ENCODE measurements at regions of chr17 and their contacts with region 1.

Region 1: GRCh38 chr17:7561028-7561575 is 617 bp upstream of the SENP3 start:
- DNase-seq: peak; percentile 87
- H3K4me3 ChIP-seq: peak overlapping the region; percentile 60 to 82 (median 73)
- H3K27ac ChIP-seq: peak overlapping the region; percentile 76
- H3K4me1 ChIP-seq: peaks cover 40% of the 10 kb centered on the region
- H3K27me3 ChIP-seq: no peaks in the 10 kb centered on the region
- CTCF ChIP-seq: peak; percentile 64 to 82

Region 2: DNA sequence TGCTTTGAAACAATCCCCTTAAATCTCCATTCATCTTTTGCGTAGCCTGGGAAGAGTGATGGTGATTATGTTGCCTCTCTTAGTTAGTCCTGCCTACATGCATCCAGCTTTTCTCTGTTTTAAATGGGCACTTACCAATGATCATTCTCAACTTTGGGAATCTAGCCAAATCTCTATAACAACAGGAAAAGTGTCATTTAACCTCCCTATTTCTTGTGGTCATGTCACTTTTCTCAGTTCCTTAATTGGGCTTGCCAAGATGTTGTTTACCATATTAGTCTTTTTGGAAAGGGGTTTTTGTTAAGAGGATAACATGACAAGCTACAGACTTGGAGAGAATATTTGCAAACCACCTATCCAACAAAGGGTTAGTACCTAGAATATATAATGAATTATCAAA is 465.5 kb before region 1 on chr17:
- CTCF ChIA-PET with region 1: no interaction called
- dilution Hi-C with region 1: no loop called
- in situ Hi-C with region 1: no loop called
- intact Hi-C with region 1: no loop called
- DNase-seq: no peak
- H3K4me3 ChIP-seq: no peak overlapping the region
- H3K27ac ChIP-seq: no peak overlapping the region
- H3K4me1 ChIP-seq: no peaks in the 10 kb centered on the region
- H3K27me3 ChIP-seq: no peaks in the 10 kb centered on the region
- CTCF ChIP-seq: no peak

Region 3: GRCh38 chr17:7280519-7281429 is 280.3 kb before region 1 on chr17:
- CTCF ChIA-PET with region 1: no interaction called
- dilution Hi-C with region 1: no loop called
- in situ Hi-C with region 1: no loop called
- intact Hi-C with region 1: loop called (anchors 1 kb)
- DNase-seq: peak; percentile 78
- H3K4me3 ChIP-seq: peak overlapping the region; percentile 47 to 49 (median 48)
- H3K27ac ChIP-seq: peak overlapping the region; percentile 24
- H3K4me1 ChIP-seq: peaks cover 22% of the 10 kb centered on the region
- H3K27me3 ChIP-seq: no peaks in the 10 kb centered on the region
- CTCF ChIP-seq: peak; percentile 95 to 97

Region 4: GRCh38 chr17:7380855-7381742 is 180.0 kb before region 1 on chr17 and contains the start of gene TNK1:
- CTCF ChIA-PET with region 1: no interaction called
- dilution Hi-C with region 1: no loop called
- in situ Hi-C with region 1: no loop called
- intact Hi-C with region 1: loop called (anchors 1 kb)
- DNase-seq: peak; percentile 66
- H3K4me3 ChIP-seq: peak within 1 kb of the TSS; percentile 57 to 60 (median 57)
- H3K27ac ChIP-seq: peak within 1 kb of the TSS; percentile 50
- H3K4me1 ChIP-seq: peaks cover 7% of the 10 kb centered on the region
- H3K27me3 ChIP-seq: no peaks in the 10 kb centered on the region
- CTCF ChIP-seq: no peak
- total RNA-seq, gene TNK1: 13.3 to 15.9 TPM

Region 5: GRCh38 chr17:7515911-7516610 is 45.0 kb before region 1 on chr17:
- CTCF ChIA-PET with region 1: interaction called, 8 read pairs
- dilution Hi-C with region 1: no loop called
- in situ Hi-C with region 1: no loop called
- intact Hi-C with region 1: loop called (anchors 1 kb)
- DNase-seq: no peak
- H3K4me3 ChIP-seq: no peak overlapping the region
- H3K27ac ChIP-seq: no peak overlapping the region
- H3K4me1 ChIP-seq: no peaks in the 10 kb centered on the region
- H3K27me3 ChIP-seq: no peaks in the 10 kb centered on the region
- CTCF ChIP-seq: no peak

Region 6: GRCh38 chr17:7589204-7589868 is 28.2 kb after region 1 on chr17:
- CTCF ChIA-PET with region 1: interaction called, 3 read pairs
- dilution Hi-C with region 1: no loop called
- in situ Hi-C with region 1: no loop called
- intact Hi-C with region 1: loop called (anchors 1 kb)
- DNase-seq: peak; percentile 83
- H3K4me3 ChIP-seq: peak overlapping the region; percentile 69 to 82 (median 69)
- H3K27ac ChIP-seq: peak overlapping the region; percentile 77
- H3K4me1 ChIP-seq: peaks cover 54% of the 10 kb centered on the region
- H3K27me3 ChIP-seq: no peaks in the 10 kb centered on the region
- CTCF ChIP-seq: peak; percentile 68 to 92